CD4-positive, alpha-beta memory T cell (primary cell): ENCODE measurements at regions of chr17 and their contacts with region 1.

Region 1: GRCh38 chr17:29931231-29931932 is 1.4 kb upstream of the SSH2 start:
- DNase-seq: peak; percentile 75 to 85 (median 81)
- H3K4me3 ChIP-seq: no peak overlapping the region
- H3K4me3 Mint-ChIP-seq: no peak overlapping the region
- H3K27ac ChIP-seq: peak overlapping the region; percentile 88
- H3K27ac Mint-ChIP-seq: no peak overlapping the region
- H3K4me1 ChIP-seq: peaks cover 46% of the 10 kb centered on the region
- H3K4me1 Mint-ChIP-seq: peaks cover 15 to 32% (median 29%) of the 10 kb centered on the region in 4 donors
- H3K27me3 ChIP-seq: no peaks in the 10 kb centered on the region
- H3K27me3 Mint-ChIP-seq: no peaks in the 10 kb centered on the region

Region 2: DNA sequence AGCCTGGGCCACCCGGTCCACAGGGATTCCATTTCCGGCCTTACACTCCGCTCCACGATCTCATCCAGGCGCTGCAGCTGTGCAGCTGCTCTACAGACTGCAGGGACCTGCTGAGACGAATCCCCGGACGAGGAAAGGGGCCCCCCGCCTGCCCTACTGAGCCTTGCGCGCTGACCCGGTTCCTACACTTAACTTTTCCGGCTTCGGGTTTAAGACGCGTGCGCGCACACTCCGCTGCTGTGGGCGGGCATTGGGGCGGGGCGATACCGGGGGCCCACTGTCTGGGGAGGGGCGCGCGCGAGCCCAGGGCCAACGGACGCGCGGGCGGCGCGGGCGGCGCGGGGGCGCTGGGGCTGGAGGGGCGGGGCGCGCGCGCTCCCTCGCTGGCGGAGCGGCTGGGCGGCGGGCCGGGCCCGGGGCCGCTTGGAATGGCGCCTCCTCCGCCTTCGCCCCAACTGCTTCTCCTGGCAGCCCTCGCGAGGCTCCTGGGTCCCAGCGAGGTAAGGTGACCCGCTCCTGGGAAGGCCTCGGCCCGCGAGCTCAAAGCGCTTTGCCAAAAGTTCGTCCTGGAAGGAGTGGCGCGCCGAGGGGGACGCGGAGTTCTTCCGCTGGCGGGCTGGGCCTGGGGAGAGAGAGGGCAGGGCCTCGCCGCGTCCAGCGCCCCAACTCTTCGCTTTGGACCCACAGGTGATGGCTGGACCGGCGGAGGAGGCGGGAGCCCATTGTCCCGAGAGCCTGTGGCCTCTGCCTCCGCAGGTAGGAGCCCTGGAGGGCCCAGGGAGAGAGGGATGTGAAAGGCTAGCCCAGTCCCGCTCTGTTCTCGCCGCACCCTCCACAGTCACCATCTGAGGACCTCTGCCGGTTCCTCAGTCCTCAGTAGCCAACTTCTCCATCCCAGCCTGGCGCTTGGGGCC is 362.8 kb before region 1 on chr17 and contains the start of gene TP53I13:
- CTCF ChIA-PET with region 1: interaction called, 8 read pairs
- POLR2A ChIA-PET with region 1: interaction called, 17 read pairs
- intact Hi-C with region 1: no loop called
- DNase-seq: peak; percentile 78 to 86 (median 83)
- H3K4me3 ChIP-seq: peak within 1 kb of the TSS; percentile 58 to 83
- H3K4me3 Mint-ChIP-seq: peak within 1 kb of the TSS; percentile 92 to 98 (median 96)
- H3K27ac ChIP-seq: peak within 1 kb of the TSS; percentile 61
- H3K27ac Mint-ChIP-seq: peak within 1 kb of the TSS; percentile 92 to 98 (median 95)
- H3K4me1 ChIP-seq: peaks cover 31% of the 10 kb centered on the region
- H3K4me1 Mint-ChIP-seq: peaks cover 23 to 55% (median 34%) of the 10 kb centered on the region in 4 donors
- H3K27me3 ChIP-seq: no peaks in the 10 kb centered on the region
- H3K27me3 Mint-ChIP-seq: no peaks in the 10 kb centered on the region
- total RNA-seq, gene TP53I13: 149 to 158 TPM

Region 3: GRCh38 chr17:29617125-29617480 is 314.3 kb before region 1 on chr17:
- CTCF ChIA-PET with region 1: interaction called, 27 read pairs
- POLR2A ChIA-PET with region 1: interaction called, 33 read pairs
- intact Hi-C with region 1: loop called (anchors 1 kb)
- DNase-seq: peak; percentile 89 to 94 (median 91)
- H3K4me3 ChIP-seq: peak overlapping the region; percentile 64 to 89
- H3K4me3 Mint-ChIP-seq: peak overlapping the region; percentile 82 to 94 (median 92)
- H3K27ac ChIP-seq: peak overlapping the region; percentile 43
- H3K27ac Mint-ChIP-seq: peak overlapping the region; percentile 63 to 89 (median 81)
- H3K4me1 ChIP-seq: peaks cover 62% of the 10 kb centered on the region
- H3K4me1 Mint-ChIP-seq: peaks cover 20 to 51% (median 33%) of the 10 kb centered on the region in 4 donors
- H3K27me3 ChIP-seq: no peaks in the 10 kb centered on the region
- H3K27me3 Mint-ChIP-seq: no peaks in the 10 kb centered on the region

Region 4: DNA sequence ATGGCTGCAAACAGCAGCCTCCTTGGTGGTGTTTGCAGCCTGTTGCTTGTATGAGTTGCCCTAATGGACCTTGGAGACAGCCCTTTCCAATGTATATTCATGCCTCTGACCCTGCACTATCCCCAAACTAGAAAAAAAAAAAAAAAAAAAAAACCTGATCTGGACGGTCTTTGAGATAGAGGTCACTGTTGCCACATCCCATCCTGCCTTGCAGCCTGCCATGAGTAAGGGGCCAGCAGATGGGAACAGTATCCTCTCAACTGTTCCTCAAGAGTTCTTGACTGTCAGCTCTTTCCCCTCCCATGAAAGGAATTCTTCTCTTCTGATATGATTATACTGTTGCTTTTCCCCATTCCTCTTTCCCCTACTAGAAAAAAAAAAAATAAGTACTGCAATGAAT is 153.7 kb before region 1 on chr17:
- CTCF ChIA-PET with region 1: interaction called, 8 read pairs
- POLR2A ChIA-PET with region 1: no interaction called
- intact Hi-C with region 1: loop called (anchors 1 kb)
- DNase-seq: no peak
- H3K4me3 ChIP-seq: no peak overlapping the region
- H3K4me3 Mint-ChIP-seq: no peak overlapping the region
- H3K27ac ChIP-seq: no peak overlapping the region
- H3K27ac Mint-ChIP-seq: no peak overlapping the region
- H3K4me1 ChIP-seq: peaks cover 8% of the 10 kb centered on the region
- H3K4me1 Mint-ChIP-seq: peaks cover 5 to 9% (median 7%) of the 10 kb centered on the region in 4 donors
- H3K27me3 ChIP-seq: no peaks in the 10 kb centered on the region
- H3K27me3 Mint-ChIP-seq: no peaks in the 10 kb centered on the region

Region 5: GRCh38 chr17:29855686-29856085 is 75.7 kb before region 1 on chr17:
- CTCF ChIA-PET with region 1: interaction called, 11 read pairs
- POLR2A ChIA-PET with region 1: interaction called, 4 read pairs
- intact Hi-C with region 1: no loop called
- DNase-seq: no peak
- H3K4me3 ChIP-seq: no peak overlapping the region
- H3K4me3 Mint-ChIP-seq: no peak overlapping the region
- H3K27ac ChIP-seq: no peak overlapping the region
- H3K27ac Mint-ChIP-seq: no peak overlapping the region
- H3K4me1 ChIP-seq: no peaks in the 10 kb centered on the region
- H3K4me1 Mint-ChIP-seq: peaks cover 0 to 15% (median 10%) of the 10 kb centered on the region in 4 donors
- H3K27me3 ChIP-seq: no peaks in the 10 kb centered on the region
- H3K27me3 Mint-ChIP-seq: no peaks in the 10 kb centered on the region

Region 6: GRCh38 chr17:29909236-29910003 is 22.0 kb before region 1 on chr17:
- CTCF ChIA-PET with region 1: interaction called, 22 read pairs
- POLR2A ChIA-PET with region 1: interaction called, 6 read pairs
- intact Hi-C with region 1: no loop called
- DNase-seq: no peak
- H3K4me3 ChIP-seq: no peak overlapping the region
- H3K4me3 Mint-ChIP-seq: no peak overlapping the region
- H3K27ac ChIP-seq: no peak overlapping the region
- H3K27ac Mint-ChIP-seq: no peak overlapping the region
- H3K4me1 ChIP-seq: peaks cover 13% of the 10 kb centered on the region
- H3K4me1 Mint-ChIP-seq: peaks cover 22 to 37% (median 32%) of the 10 kb centered on the region in 4 donors
- H3K27me3 ChIP-seq: no peaks in the 10 kb centered on the region
- H3K27me3 Mint-ChIP-seq: no peaks in the 10 kb centered on the region

Region 7: DNA sequence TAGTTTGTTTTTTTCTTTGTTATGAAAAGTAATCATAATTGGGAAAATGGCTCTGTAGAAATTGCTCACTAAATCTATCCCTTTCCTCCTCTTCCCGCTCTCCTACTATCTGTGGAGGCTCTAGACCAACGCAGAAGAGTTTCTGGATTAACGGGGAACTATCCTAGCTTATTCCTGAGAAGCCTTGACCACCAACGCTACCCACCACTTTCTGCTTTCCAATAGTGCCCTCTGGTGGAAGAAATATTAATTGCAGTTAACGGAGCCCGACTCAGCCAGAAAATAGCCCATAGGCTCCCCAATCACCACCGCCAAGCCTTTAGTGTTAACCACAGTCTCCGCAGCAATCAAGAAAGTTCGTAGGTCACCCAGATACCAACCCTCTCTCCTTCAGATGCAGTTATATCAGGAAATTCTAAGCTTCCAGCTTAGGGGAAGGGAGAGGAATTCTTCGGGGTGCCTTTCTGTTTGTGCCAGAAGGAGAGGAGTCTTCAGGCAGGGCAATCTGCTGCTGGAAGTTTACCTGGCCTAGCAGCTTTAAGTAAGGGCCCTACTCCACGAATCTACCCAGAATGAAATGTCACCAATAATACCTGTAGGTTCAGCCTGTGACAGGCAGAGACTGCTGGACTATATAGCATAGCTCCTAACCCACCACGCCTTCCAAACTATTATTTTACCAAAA is 162.2 kb after region 1 on chr17:
- CTCF ChIA-PET with region 1: interaction called, 14 read pairs
- POLR2A ChIA-PET with region 1: no interaction called
- intact Hi-C with region 1: no loop called
- DNase-seq: peak; percentile 41 to 66 (median 52)
- H3K4me3 ChIP-seq: no peak overlapping the region
- H3K4me3 Mint-ChIP-seq: peak overlapping the region in 1 of 8 donors; percentile 24
- H3K27ac ChIP-seq: no peak overlapping the region
- H3K27ac Mint-ChIP-seq: no peak overlapping the region
- H3K4me1 ChIP-seq: peaks cover 6% of the 10 kb centered on the region
- H3K4me1 Mint-ChIP-seq: peaks cover 0 to 8% (median 3%) of the 10 kb centered on the region in 4 donors
- H3K27me3 ChIP-seq: no peaks in the 10 kb centered on the region
- H3K27me3 Mint-ChIP-seq: peaks cover 15 to 29% of the 10 kb centered on the region in 2 donors